ENCODE measurements at regions of chr5 and their contacts with region 1.

Region 1: GRCh38 chr5:95858661-95859326 is 36.3 kb upstream of the GLRX start:
- DNase-seq: peak; percentile 93 to 99
- H3K4me3 ChIP-seq: peak overlapping the region; percentile 15 to 25
- H3K27ac ChIP-seq: peak overlapping the region; percentile 89 to 97
- H3K4me1 ChIP-seq: peaks cover 0 to 79% (median 55%) of the 10 kb centered on the region in 4 donors
- H3K27me3 ChIP-seq: no peaks in the 10 kb centered on the region
- CTCF ChIP-seq: peak; percentile 99 to 100

Region 2: GRCh38 chr5:95718203-95718602 is 140.6 kb before region 1 on chr5:
- intact Hi-C with region 1: no loop called
- DNase-seq: no peak
- H3K4me3 ChIP-seq: no peak overlapping the region
- H3K27ac ChIP-seq: no peak overlapping the region
- H3K4me1 ChIP-seq: no peaks in the 10 kb centered on the region
- H3K27me3 ChIP-seq: no peaks in the 10 kb centered on the region
- CTCF ChIP-seq: no peak

Region 3: GRCh38 chr5:96336351-96336985 is 477.7 kb after region 1 on chr5:
- intact Hi-C with region 1: loop called (anchors 2 kb)
- DNase-seq: peak; percentile 87 to 92
- H3K4me3 ChIP-seq: no peak overlapping the region
- H3K27ac ChIP-seq: peak overlapping the region; percentile 84 to 87
- H3K4me1 ChIP-seq: peaks cover 0 to 93% (median 70%) of the 10 kb centered on the region in 4 donors
- H3K27me3 ChIP-seq: no peaks in the 10 kb centered on the region
- CTCF ChIP-seq: peak; percentile 87

Region 4: DNA sequence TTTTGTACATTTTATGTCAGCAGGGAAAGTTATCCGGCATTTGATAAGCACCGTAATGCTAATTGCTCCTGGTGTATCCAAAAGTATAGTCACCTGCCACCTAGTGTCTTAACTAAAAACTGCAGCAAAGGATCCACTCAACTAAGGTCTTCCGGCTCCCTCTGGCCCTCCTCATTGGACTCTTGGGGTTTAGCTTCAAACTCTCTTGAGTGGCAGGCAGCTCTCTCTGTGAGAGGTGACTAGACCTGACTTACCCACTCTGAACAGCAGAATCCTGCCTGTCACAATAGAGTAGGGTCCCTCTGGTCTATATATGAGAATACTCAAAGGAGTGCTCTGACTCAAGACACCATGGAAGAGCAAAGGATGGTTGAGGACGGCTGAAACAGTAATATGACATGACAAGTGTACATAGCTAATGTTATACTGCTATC is 743.0 kb after region 1 on chr5:
- intact Hi-C with region 1: loop called (anchors 10 kb)
- DNase-seq: peak in 1 of 2 donors; percentile 51
- H3K4me3 ChIP-seq: no peak overlapping the region
- H3K27ac ChIP-seq: no peak overlapping the region
- H3K4me1 ChIP-seq: no peaks in the 10 kb centered on the region
- H3K27me3 ChIP-seq: no peaks in the 10 kb centered on the region
- CTCF ChIP-seq: peak; percentile 79 to 88

Region 5: DNA sequence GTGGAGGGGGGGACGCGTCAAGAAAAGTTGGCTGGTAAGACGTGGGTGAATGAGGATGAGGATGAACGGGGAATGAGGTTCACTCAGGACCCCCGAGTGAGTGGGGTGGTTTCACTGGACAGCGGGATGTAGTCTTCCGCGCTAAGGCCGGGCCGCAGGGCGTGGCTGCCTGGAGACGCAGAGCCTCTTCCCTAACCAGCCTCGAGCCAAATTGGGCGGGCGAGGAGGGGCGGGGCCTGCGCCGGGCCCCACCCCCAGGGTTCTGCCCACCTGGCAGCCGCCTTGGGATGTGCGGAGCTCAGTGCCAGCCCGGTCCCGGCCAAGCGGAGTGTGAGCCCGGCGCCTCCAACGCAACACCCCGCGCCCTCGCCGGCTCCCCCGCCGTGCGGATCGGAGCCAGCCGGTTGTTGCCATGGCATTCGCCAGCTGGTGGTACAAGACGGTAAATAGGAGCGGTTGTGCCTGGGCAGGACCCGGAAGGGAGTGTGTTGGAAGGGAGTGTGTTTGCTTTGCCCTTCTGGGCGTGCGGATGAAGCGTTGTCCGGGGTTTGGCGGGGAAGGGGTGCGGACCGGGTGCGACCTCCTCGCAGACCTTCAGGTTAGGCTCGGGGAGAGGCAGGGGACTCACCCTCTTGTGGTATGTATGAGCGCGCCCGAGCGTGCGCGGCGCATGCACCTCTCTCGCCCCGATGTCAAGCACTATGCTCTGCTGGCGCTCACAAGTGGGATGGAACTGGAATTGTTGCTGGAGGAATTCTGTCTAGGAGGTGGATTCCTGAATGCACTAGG is 804.1 kb after region 1 on chr5:
- intact Hi-C with region 1: loop called (anchors 2 kb)
- DNase-seq: peak; percentile 93 to 98
- H3K4me3 ChIP-seq: peak overlapping the region; percentile 98 to 100
- H3K27ac ChIP-seq: peak overlapping the region; percentile 100
- H3K4me1 ChIP-seq: peaks cover 0 to 38% (median 10%) of the 10 kb centered on the region in 4 donors
- H3K27me3 ChIP-seq: no peaks in the 10 kb centered on the region
- CTCF ChIP-seq: no peak